ENCODE measurements at regions of chr4 and their contacts with region 1.

Region 1: GRCh38 chr4:67393699-67394281 is 151.5 kb downstream of the CENPC start:
- DNase-seq: peak; percentile 1
- H3K4me3 ChIP-seq: no peak overlapping the region
- H3K27ac ChIP-seq: no peak overlapping the region
- H3K4me1 ChIP-seq: no peaks in the 10 kb centered on the region
- H3K27me3 ChIP-seq: no peaks in the 10 kb centered on the region
- CTCF ChIP-seq: peak; percentile 55 to 67

Region 2: DNA sequence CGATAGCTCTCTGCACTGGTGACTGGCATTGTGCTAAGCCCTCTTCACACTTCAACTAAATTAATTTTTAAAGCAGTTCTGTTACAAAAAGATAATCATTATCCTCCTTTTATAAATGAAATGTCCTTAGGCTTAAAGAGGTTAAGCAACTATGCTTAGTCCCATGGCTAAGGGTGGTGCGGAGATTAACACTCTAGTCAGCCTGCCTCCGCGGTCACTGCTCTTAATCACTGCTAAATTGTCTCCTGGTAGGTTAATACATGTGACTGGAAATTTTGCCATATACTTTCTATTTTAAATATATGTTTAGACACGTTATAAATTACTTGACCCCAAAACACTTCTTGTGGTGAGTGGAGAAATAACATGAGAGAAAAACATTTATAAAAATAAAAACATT is 322.1 kb before region 1 on chr4:
- CTCF ChIA-PET with region 1: no interaction called
- dilution Hi-C with region 1: no loop called
- in situ Hi-C with region 1: no loop called
- intact Hi-C with region 1: no loop called
- DNase-seq: no peak
- H3K4me3 ChIP-seq: no peak overlapping the region
- H3K27ac ChIP-seq: no peak overlapping the region
- H3K4me1 ChIP-seq: no peaks in the 10 kb centered on the region
- H3K27me3 ChIP-seq: no peaks in the 10 kb centered on the region
- CTCF ChIP-seq: no peak

Region 3: DNA sequence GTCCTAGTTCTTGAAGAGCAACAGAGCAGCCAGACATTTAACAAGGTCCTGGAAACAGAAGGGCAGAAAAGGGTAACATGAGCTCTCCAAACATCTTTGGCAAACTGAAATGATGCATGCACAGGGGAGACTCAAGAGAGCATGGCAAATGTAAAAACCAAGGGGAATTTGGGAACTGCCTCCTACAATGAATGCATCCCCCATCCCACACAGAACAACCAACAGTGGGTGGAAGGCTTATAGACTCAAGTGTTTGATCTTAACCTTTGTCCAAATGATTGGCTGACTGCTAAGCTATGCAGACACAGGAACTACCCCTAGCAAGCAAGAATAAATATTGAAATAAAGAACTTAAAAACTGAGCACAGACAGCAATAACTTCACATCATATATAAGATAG is 77.1 kb after region 1 on chr4:
- CTCF ChIA-PET with region 1: interaction called, 10 read pairs
- dilution Hi-C with region 1: no loop called
- in situ Hi-C with region 1: no loop called
- intact Hi-C with region 1: no loop called
- DNase-seq: no peak
- H3K4me3 ChIP-seq: no peak overlapping the region
- H3K27ac ChIP-seq: no peak overlapping the region
- H3K4me1 ChIP-seq: no peaks in the 10 kb centered on the region
- H3K27me3 ChIP-seq: no peaks in the 10 kb centered on the region
- CTCF ChIP-seq: no peak

Region 4: DNA sequence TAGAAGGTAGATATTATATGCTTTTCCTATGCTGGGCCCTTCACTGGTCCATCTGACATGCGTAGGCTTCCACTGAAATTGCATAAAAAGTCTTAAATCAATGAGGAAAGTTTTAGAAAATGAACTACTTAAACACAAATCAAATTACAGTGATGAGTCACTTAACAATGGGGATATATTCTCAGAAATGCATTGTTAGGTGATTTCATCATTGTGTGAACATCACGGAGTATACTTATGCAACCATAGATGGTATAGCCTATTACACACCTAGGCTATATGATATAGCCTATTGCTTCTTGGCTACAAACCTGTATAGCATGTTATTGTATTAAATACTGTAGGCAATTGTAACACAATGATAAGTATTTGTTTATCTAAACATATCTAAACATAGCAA is 175.0 kb after region 1 on chr4:
- CTCF ChIA-PET with region 1: no interaction called
- dilution Hi-C with region 1: no loop called
- in situ Hi-C with region 1: no loop called
- intact Hi-C with region 1: no loop called
- DNase-seq: peak; percentile 49
- H3K4me3 ChIP-seq: no peak overlapping the region
- H3K27ac ChIP-seq: no peak overlapping the region
- H3K4me1 ChIP-seq: no peaks in the 10 kb centered on the region
- H3K27me3 ChIP-seq: no peaks in the 10 kb centered on the region
- CTCF ChIP-seq: no peak

Region 5: GRCh38 chr4:67988991-67989390 is 595.2 kb after region 1 on chr4:
- CTCF ChIA-PET with region 1: no interaction called
- dilution Hi-C with region 1: no loop called
- in situ Hi-C with region 1: no loop called
- intact Hi-C with region 1: no loop called
- DNase-seq: peak; percentile 20
- H3K4me3 ChIP-seq: no peak overlapping the region
- H3K27ac ChIP-seq: no peak overlapping the region
- H3K4me1 ChIP-seq: no peaks in the 10 kb centered on the region
- H3K27me3 ChIP-seq: no peaks in the 10 kb centered on the region
- CTCF ChIP-seq: no peak